Activated B cell treated with CpG ODN at 0.5 μM for 24 hours (primary cell): ENCODE measurements at regions of chr20 and their contacts with region 1.

Region 1: GRCh38 chr20:25696384-25697131 is at the start of gene ZNF337:
- DNase-seq: peak; percentile 93
- ATAC-seq: peak; percentile 97
- H3K4me3 Mint-ChIP-seq: peak within 1 kb of the TSS; percentile 94
- H3K27ac Mint-ChIP-seq: peak within 1 kb of the TSS; percentile 85
- H3K4me1 Mint-ChIP-seq: peaks cover 30% of the 10 kb centered on the region
- H3K27me3 Mint-ChIP-seq: no peaks in the 10 kb centered on the region
- CTCF ChIP-seq: no peak
- total RNA-seq, gene ZNF337: 13.5 and 15.5 TPM in 2 replicates

Region 2: GRCh38 chr20:25057234-25058050 is 639.1 kb before region 1 on chr20:
- CTCF ChIA-PET with region 1: no interaction called
- POLR2A ChIA-PET with region 1: no interaction called
- intact Hi-C with region 1: loop called (anchors 5 kb)
- DNase-seq: peak; percentile 72
- ATAC-seq: peak; percentile 42
- H3K4me3 Mint-ChIP-seq: peak overlapping the region; percentile 89
- H3K27ac Mint-ChIP-seq: peak overlapping the region; percentile 93
- H3K4me1 Mint-ChIP-seq: peaks cover 61% of the 10 kb centered on the region
- H3K27me3 Mint-ChIP-seq: no peaks in the 10 kb centered on the region
- CTCF ChIP-seq: no peak

Region 3: GRCh38 chr20:25247956-25248785 is 448.4 kb before region 1 on chr20 and contains the start of gene PYGB:
- CTCF ChIA-PET with region 1: no interaction called
- POLR2A ChIA-PET with region 1: no interaction called
- intact Hi-C with region 1: loop called (anchors 1 kb)
- DNase-seq: peak; percentile 77
- ATAC-seq: peak; percentile 87
- H3K4me3 Mint-ChIP-seq: peak within 1 kb of the TSS; percentile 94
- H3K27ac Mint-ChIP-seq: peak within 1 kb of the TSS; percentile 86
- H3K4me1 Mint-ChIP-seq: peaks cover 25% of the 10 kb centered on the region
- H3K27me3 Mint-ChIP-seq: peaks cover 10% of the 10 kb centered on the region
- CTCF ChIP-seq: no peak
- total RNA-seq, gene PYGB: 21.5 and 23.5 TPM in 2 replicates

Region 4: GRCh38 chr20:25407311-25408169 is 289.0 kb before region 1 on chr20 and contains the start of gene GINS1:
- CTCF ChIA-PET with region 1: no interaction called
- POLR2A ChIA-PET with region 1: no interaction called
- intact Hi-C with region 1: loop called (anchors 2 kb)
- DNase-seq: peak; percentile 70
- ATAC-seq: peak; percentile 93
- H3K4me3 Mint-ChIP-seq: peak within 1 kb of the TSS; percentile 91
- H3K27ac Mint-ChIP-seq: peak within 1 kb of the TSS; percentile 76
- H3K4me1 Mint-ChIP-seq: peaks cover 17% of the 10 kb centered on the region
- H3K27me3 Mint-ChIP-seq: no peaks in the 10 kb centered on the region
- CTCF ChIP-seq: no peak
- total RNA-seq, gene GINS1: 2.9 and 5.4 TPM in 2 replicates

Region 5: GRCh38 chr20:25444556-25444955 is 252.0 kb before region 1 on chr20:
- CTCF ChIA-PET with region 1: no interaction called
- POLR2A ChIA-PET with region 1: no interaction called
- intact Hi-C with region 1: no loop called
- DNase-seq: no peak
- ATAC-seq: no peak
- H3K4me3 Mint-ChIP-seq: no peak overlapping the region
- H3K27ac Mint-ChIP-seq: no peak overlapping the region
- H3K4me1 Mint-ChIP-seq: peaks cover 6% of the 10 kb centered on the region
- H3K27me3 Mint-ChIP-seq: no peaks in the 10 kb centered on the region
- CTCF ChIP-seq: no peak

Region 6: GRCh38 chr20:25623736-25624499 is 72.6 kb before region 1 on chr20 and contains the start of gene NANP:
- CTCF ChIA-PET with region 1: no interaction called
- POLR2A ChIA-PET with region 1: no interaction called
- intact Hi-C with region 1: loop called (anchors 1 kb)
- DNase-seq: peak; percentile 88
- ATAC-seq: peak; percentile 84
- H3K4me3 Mint-ChIP-seq: peak within 1 kb of the TSS; percentile 92
- H3K27ac Mint-ChIP-seq: peak within 1 kb of the TSS; percentile 92
- H3K4me1 Mint-ChIP-seq: peaks cover 25% of the 10 kb centered on the region
- H3K27me3 Mint-ChIP-seq: no peaks in the 10 kb centered on the region
- CTCF ChIP-seq: no peak
- total RNA-seq, gene NANP: 2.3 and 2.7 TPM in 2 replicates

Region 7: GRCh38 chr20:25750765-25751696 is 54.5 kb after region 1 on chr20:
- CTCF ChIA-PET with region 1: no interaction called
- POLR2A ChIA-PET with region 1: no interaction called
- intact Hi-C with region 1: loop called (anchors 1 kb)
- DNase-seq: peak; percentile 32
- ATAC-seq: peak; percentile 98
- H3K4me3 Mint-ChIP-seq: peak overlapping the region; percentile 84
- H3K27ac Mint-ChIP-seq: peak overlapping the region; percentile 41
- H3K4me1 Mint-ChIP-seq: peaks cover 14% of the 10 kb centered on the region
- H3K27me3 Mint-ChIP-seq: no peaks in the 10 kb centered on the region
- CTCF ChIP-seq: no peak